ENCODE measurements at regions of chr9 and their contacts with region 1.

Region 1: GRCh38 chr9:93003552-93004407 is 54.7 kb upstream of the SUSD3 start:
- DNase-seq: peak in 1 of 2 donors; percentile 69
- H3K4me3 ChIP-seq: peak overlapping the region; percentile 34 to 52
- H3K27ac ChIP-seq: no peak overlapping the region
- H3K4me1 ChIP-seq: no peaks in the 10 kb centered on the region
- H3K27me3 ChIP-seq: no peaks in the 10 kb centered on the region
- CTCF ChIP-seq: peak; percentile 61 to 70 (median 63)

Region 2: GRCh38 chr9:92954049-92954861 is 49.5 kb before region 1 on chr9:
- intact Hi-C with region 1: no loop called
- DNase-seq: peak in 1 of 2 donors; percentile 56
- H3K4me3 ChIP-seq: no peak overlapping the region
- H3K27ac ChIP-seq: no peak overlapping the region
- H3K4me1 ChIP-seq: no peaks in the 10 kb centered on the region
- H3K27me3 ChIP-seq: no peaks in the 10 kb centered on the region
- CTCF ChIP-seq: no peak

Region 3: GRCh38 chr9:93058355-93059096 is 54.7 kb after region 1 on chr9 and contains the start of gene SUSD3:
- intact Hi-C with region 1: loop called (anchors 5 kb)
- DNase-seq: peak in 1 of 2 donors; percentile 87
- H3K4me3 ChIP-seq: peak within 1 kb of the TSS; percentile 64 to 74
- H3K27ac ChIP-seq: peak within 1 kb of the TSS; percentile 90 to 92
- H3K4me1 ChIP-seq: peaks cover 28 to 52% of the 10 kb centered on the region in 2 donors
- H3K27me3 ChIP-seq: no peaks in the 10 kb centered on the region
- CTCF ChIP-seq: no peak
- total RNA-seq, gene SUSD3: not detected

Measured in ascending aorta (tissue), 2 donors.